Mammary epithelial cell (primary cell): ENCODE measurements at regions of chr7 and their contacts with region 1.

Region 1: DNA sequence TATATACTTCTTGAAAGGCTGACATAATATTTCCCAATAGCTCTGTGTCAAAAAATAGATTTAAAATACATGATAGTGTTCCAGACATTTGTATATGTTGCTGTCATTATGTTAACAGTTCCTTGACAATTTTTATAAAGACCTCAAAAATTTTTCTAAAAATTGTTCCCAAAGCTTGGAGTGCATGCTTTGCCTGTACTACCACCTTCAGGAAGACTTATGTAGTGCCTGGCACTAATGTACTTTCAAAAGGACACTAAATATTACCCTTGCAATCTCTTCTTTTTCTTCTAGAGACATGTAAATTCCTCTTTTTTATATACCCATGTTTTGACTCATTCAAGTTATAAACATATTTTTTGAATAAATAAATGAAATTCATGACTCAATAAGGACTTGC is 48.0 kb upstream of the SP8 start:
- DNase-seq: no peak
- H3K4me3 ChIP-seq: no peak overlapping the region
- H3K27ac ChIP-seq: no peak overlapping the region
- H3K4me1 ChIP-seq: no peaks in the 10 kb centered on the region
- H3K27me3 ChIP-seq: no peaks in the 10 kb centered on the region
- CTCF ChIP-seq: peak; percentile 61 to 66

Region 2: GRCh38 chr7:20647908-20648776 is 186.5 kb before region 1 on chr7:
- CTCF ChIA-PET with region 1: no interaction called
- dilution Hi-C with region 1: no loop called
- in situ Hi-C with region 1: no loop called
- intact Hi-C with region 1: loop called (anchors 10 kb)
- DNase-seq: peak; percentile 22
- H3K4me3 ChIP-seq: no peak overlapping the region
- H3K27ac ChIP-seq: no peak overlapping the region
- H3K4me1 ChIP-seq: no peaks in the 10 kb centered on the region
- H3K27me3 ChIP-seq: peaks cover 2% of the 10 kb centered on the region
- CTCF ChIP-seq: peak; percentile 47 to 62

Region 3: GRCh38 chr7:20778063-20778721 is 56.5 kb before region 1 on chr7:
- CTCF ChIA-PET with region 1: no interaction called
- dilution Hi-C with region 1: no loop called
- in situ Hi-C with region 1: no loop called
- intact Hi-C with region 1: loop called (anchors 1 kb)
- DNase-seq: peak; percentile 37
- H3K4me3 ChIP-seq: peak overlapping the region; percentile 52 to 77 (median 55)
- H3K27ac ChIP-seq: no peak overlapping the region
- H3K4me1 ChIP-seq: peaks cover 4% of the 10 kb centered on the region
- H3K27me3 ChIP-seq: peaks cover 17% of the 10 kb centered on the region
- CTCF ChIP-seq: peak; percentile 52 to 74